PC-9 (cell line): ENCODE measurements at regions of chr1 and their contacts with region 1.

Region 1: GRCh38 chr1:172719694-172720138 is 60.8 kb downstream of the FASLG start:
- DNase-seq: peak in 1 of 2 experiments; percentile 22
- H3K4me3 ChIP-seq: no peak overlapping the region
- H3K27ac ChIP-seq: no peak overlapping the region
- H3K4me1 ChIP-seq: no peaks in the 10 kb centered on the region
- H3K27me3 ChIP-seq: no peaks in the 10 kb centered on the region
- CTCF ChIP-seq: peak; percentile 90

Region 2: GRCh38 chr1:171801487-171801891 is 918.2 kb before region 1 on chr1:
- CTCF ChIA-PET with region 1: no interaction called
- POLR2A ChIA-PET with region 1: no interaction called
- intact Hi-C with region 1: loop called (anchors 5 kb)
- DNase-seq: peak in 1 of 2 experiments; percentile 43
- H3K4me3 ChIP-seq: no peak overlapping the region
- H3K27ac ChIP-seq: no peak overlapping the region
- H3K4me1 ChIP-seq: no peaks in the 10 kb centered on the region
- H3K27me3 ChIP-seq: no peaks in the 10 kb centered on the region
- CTCF ChIP-seq: peak; percentile 82

Region 3: DNA sequence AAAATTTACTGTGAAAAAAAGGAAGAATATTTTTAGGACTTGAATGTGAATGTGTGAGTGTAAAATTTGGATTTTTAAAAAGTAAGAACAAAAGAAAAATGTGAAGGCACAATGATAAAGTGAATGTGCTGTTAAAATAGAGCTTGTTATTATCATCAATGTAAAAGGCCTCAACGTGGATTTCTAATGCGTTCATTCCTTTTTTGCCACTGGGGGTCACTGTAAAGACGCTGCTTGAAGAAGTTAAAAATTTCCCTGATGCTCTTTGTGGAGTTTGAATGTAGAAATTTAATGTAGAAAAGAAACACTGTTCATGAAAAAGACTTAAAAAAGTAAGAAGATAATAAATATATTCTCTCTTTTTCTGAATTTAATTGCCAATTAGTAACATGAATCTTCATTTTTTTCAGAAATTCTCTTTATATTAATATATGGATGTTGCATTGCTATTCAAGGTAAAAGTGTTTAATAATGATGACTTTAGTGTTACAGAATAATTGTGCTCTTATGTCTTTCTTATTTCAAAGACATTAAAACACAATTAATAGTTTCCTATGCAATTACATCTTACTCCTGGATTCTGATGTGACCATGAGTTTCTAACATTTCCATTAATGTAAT is 716.9 kb before region 1 on chr1:
- CTCF ChIA-PET with region 1: interaction called, 3 read pairs
- POLR2A ChIA-PET with region 1: no interaction called
- intact Hi-C with region 1: loop called (anchors 5 kb)
- DNase-seq: peak; percentile 23 to 38
- H3K4me3 ChIP-seq: no peak overlapping the region
- H3K27ac ChIP-seq: no peak overlapping the region
- H3K4me1 ChIP-seq: no peaks in the 10 kb centered on the region
- H3K27me3 ChIP-seq: no peaks in the 10 kb centered on the region
- CTCF ChIP-seq: peak; percentile 75

Region 4: DNA sequence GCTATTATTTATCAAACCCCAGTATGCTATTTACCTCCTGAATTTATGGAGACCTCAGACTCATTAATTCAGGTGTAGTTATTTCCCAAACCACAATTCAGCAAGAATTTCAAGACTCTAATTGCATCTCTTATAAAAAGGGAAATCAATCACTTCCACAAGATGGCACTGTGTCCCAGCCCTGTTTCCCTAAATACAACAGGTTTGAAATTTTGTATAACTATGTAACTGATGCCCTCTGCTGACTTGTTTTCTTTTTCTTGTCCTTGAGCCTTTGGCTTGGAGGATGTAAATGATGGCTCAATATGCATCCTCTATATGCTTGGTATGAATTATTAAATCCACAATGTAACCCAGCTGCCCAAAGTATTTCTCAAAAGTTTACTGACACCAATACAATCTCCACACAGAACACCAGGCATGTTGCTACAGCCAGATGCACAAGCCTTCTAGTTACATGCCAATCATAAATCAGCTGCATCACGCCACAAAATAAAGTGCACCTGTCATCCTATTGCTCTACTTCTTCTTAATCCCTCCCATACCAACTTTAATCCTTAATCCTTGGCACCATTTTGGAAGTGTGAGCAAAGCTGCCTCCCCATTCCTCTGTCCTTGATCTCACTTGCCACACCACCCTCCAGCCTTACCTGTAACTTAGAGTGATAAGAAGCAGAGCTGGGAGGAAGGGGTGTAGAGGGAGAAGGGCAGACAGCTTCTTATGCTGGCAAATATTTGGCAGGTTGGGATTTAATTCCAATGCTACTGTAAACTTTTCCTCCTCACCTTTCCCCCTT is 290.2 kb before region 1 on chr1:
- CTCF ChIA-PET with region 1: no interaction called
- POLR2A ChIA-PET with region 1: no interaction called
- intact Hi-C with region 1: loop called (anchors 5 kb)
- DNase-seq: peak; percentile 40 to 68
- H3K4me3 ChIP-seq: no peak overlapping the region
- H3K27ac ChIP-seq: no peak overlapping the region
- H3K4me1 ChIP-seq: peaks cover 16% of the 10 kb centered on the region
- H3K27me3 ChIP-seq: no peaks in the 10 kb centered on the region
- CTCF ChIP-seq: peak; percentile 81

Region 5: GRCh38 chr1:172449585-172450534 is 269.9 kb before region 1 on chr1:
- CTCF ChIA-PET with region 1: interaction called, 16 read pairs
- POLR2A ChIA-PET with region 1: no interaction called
- intact Hi-C with region 1: loop called (anchors 1 kb)
- DNase-seq: peak; percentile 42 to 52
- H3K4me3 ChIP-seq: peak overlapping the region; percentile 38; the same call in 1 of the 2 replicates
- H3K27ac ChIP-seq: peak overlapping the region; percentile 91
- H3K4me1 ChIP-seq: peaks cover 67% of the 10 kb centered on the region
- H3K27me3 ChIP-seq: no peaks in the 10 kb centered on the region
- CTCF ChIP-seq: peak; percentile 76

Region 6: GRCh38 chr1:172609528-172609927 is 110.2 kb before region 1 on chr1:
- CTCF ChIA-PET with region 1: interaction called, 8 read pairs
- POLR2A ChIA-PET with region 1: interaction called, 11 read pairs
- intact Hi-C with region 1: loop called (anchors 1 kb)
- DNase-seq: no peak
- H3K4me3 ChIP-seq: no peak overlapping the region
- H3K27ac ChIP-seq: no peak overlapping the region
- H3K4me1 ChIP-seq: no peaks in the 10 kb centered on the region
- H3K27me3 ChIP-seq: no peaks in the 10 kb centered on the region
- CTCF ChIP-seq: peak; percentile 73

Region 7: DNA sequence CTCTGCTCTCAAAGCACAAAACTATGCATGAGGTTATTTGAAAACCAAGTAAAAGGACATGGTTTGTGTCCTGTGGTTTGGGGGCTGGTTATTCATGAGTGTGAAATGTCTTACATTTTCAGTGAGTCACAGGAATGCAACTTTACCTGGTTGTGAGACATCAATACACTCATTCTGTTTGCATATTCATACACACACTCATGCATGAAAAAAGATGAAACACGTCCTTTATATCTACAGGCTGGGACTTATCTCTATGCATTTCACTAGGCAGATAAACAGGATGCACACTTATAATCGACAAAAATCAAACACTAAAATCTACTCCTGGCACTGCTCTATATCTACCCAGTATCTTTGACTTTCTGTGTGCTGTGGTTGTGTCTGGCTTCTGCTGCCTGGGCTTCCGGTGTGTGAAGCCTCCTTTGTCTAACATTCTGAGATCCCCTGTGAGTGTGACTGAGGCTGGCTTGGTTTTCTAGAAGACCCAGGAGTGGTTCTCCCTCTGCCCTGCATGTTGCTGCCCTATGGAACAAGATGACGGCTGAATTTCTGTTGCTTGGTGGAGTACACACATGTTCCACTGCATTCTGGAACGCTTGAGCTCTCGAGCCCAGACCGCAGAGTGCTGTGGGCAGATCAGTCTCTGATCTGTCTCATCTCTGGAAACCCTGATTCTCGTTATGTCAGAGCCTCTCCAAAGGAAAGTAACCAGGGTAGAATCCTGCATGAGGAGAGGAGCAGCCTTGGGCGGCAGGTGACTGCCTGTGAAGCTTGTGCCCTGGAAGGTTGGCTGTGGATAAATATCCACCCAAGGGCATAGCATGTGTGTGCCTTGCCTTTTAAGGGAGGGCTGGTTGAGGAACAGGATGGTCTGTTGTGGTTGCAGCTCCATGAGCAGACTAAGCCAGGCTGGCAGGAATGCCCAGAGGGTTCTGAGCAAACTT is 80.6 kb before region 1 on chr1:
- CTCF ChIA-PET with region 1: interaction called, 4 read pairs
- POLR2A ChIA-PET with region 1: no interaction called
- intact Hi-C with region 1: loop called (anchors 5 kb)
- DNase-seq: peak; percentile 55 to 98
- H3K4me3 ChIP-seq: peak overlapping the region; percentile 3; the same call in 1 of the 2 replicates
- H3K27ac ChIP-seq: peak overlapping the region; percentile 87
- H3K4me1 ChIP-seq: peaks cover 44% of the 10 kb centered on the region
- H3K27me3 ChIP-seq: no peaks in the 10 kb centered on the region
- CTCF ChIP-seq: no peak